ENCODE measurements at regions of chr17 and their contacts with region 1.

Region 1: GRCh38 chr17:40909351-40909750 is 24.3 kb upstream of the KRT20 start:
- DNase-seq: peak; percentile 40 to 69
- ATAC-seq: peak; percentile 78 to 96 (median 86)
- H3K4me3 ChIP-seq: no peak overlapping the region
- H3K27ac ChIP-seq: no peak overlapping the region
- H3K4me1 ChIP-seq: peaks cover 0 to 33% (median 0%) of the 10 kb centered on the region in 9 donors
- H3K27me3 ChIP-seq: peaks cover 0 to 26% (median 22%) of the 10 kb centered on the region in 7 donors
- CTCF ChIP-seq: peak; percentile 41 to 85 (median 79)

Region 2: GRCh38 chr17:40854159-40854814 is 55.1 kb before region 1 on chr17:
- intact Hi-C with region 1: loop called in 1 of 10 experiments (anchors 5 kb)
- DNase-seq: no peak
- ATAC-seq: peak in 1 of 8 donors; percentile 62
- H3K4me3 ChIP-seq: no peak overlapping the region
- H3K27ac ChIP-seq: no peak overlapping the region
- H3K4me1 ChIP-seq: peaks cover 0 to 14% (median 0%) of the 10 kb centered on the region in 9 donors
- H3K27me3 ChIP-seq: peaks cover 0 to 16% (median 0%) of the 10 kb centered on the region in 7 donors
- CTCF ChIP-seq: no peak

Region 3: GRCh38 chr17:40886090-40886489 is 23.3 kb before region 1 on chr17:
- intact Hi-C with region 1: no loop called
- DNase-seq: no peak
- ATAC-seq: no peak
- H3K4me3 ChIP-seq: no peak overlapping the region
- H3K27ac ChIP-seq: no peak overlapping the region
- H3K4me1 ChIP-seq: peaks cover 0 to 4% (median 0%) of the 10 kb centered on the region in 9 donors
- H3K27me3 ChIP-seq: peaks cover 0 to 52% (median 20%) of the 10 kb centered on the region in 7 donors
- CTCF ChIP-seq: no peak

Region 4: DNA sequence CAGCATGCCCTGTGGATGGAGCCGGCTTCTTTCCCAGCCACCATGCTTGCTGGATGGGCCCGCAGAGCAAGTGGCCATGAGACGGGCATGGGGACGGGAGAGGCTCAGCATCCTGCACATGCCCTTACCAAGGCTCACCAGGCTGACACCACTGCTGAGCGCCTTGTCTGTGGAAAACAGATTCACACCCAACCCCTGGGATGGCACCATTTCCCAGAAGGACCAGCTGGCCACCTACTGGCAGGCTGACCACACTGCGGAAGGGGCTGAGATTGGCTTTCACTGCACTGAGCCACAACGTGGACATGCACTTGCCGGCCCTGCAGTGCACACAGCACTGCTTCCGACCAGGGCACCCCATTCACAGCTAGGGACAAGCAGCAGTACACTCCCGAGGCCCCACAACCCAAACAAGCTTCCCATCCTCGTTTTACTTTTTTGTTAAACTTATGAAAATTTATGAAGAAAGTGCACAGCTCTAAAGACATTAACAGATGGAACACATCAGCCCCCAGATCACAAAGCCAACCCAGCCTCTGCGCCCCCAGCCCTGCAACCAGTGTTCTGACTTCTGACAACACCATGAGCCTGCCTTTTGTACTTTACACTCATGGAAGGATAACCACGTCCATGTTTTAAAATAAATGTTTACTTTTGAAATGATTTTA is 420.1 kb after region 1 on chr17:
- intact Hi-C with region 1: loop called in 6 of 10 experiments (anchors 5 to 10 kb)
- DNase-seq: peak in 1 of 2 donors; percentile 35
- ATAC-seq: peak in 2 of 8 donors; percentile 52 to 66
- H3K4me3 ChIP-seq: no peak overlapping the region
- H3K27ac ChIP-seq: no peak overlapping the region
- H3K4me1 ChIP-seq: no peaks in the 10 kb centered on the region
- H3K27me3 ChIP-seq: peaks cover 0 to 24% (median 0%) of the 10 kb centered on the region in 7 donors
- CTCF ChIP-seq: peak; percentile 16 to 59 (median 53)

Region 5: DNA sequence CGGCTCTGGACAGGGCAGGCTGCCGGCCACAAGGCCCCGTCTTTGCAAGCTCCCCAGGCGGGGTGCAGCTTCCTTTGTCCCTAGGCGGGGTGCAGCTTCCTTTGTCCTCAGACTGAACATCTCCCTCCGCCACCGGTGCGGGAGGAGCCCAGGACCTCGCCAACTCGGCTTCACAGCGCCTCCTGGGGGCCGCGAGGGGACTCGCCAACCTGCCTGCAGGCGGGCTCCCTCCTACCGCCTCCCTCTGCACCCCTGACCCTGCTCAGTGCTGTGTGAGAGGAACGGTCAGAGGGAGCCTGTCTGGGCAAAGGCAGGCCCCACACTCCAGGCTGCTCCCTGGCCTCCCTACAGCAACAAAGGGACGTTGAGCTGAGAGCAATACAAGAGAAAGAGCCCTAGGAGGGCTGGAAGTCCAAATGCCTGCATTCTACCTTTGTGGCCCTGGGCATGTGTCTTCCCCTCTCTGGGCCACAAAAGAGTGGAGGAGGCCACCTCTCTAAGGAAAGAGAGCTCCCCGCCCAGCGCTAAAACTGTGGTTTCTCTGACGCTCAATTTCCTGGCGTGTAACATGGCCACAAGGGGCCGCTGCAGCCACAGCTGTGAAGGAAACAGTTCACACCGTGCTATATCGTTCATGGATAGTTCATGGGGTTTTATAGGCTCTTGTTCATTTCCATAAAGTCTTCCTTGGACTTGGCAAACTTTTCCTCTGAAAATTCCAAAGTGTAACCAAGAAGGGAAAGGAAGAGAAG is 639.7 kb after region 1 on chr17:
- intact Hi-C with region 1: loop called in 8 of 10 experiments (anchors 2 to 10 kb)
- DNase-seq: peak; percentile 75 to 79
- ATAC-seq: peak; percentile 87 to 95 (median 92)
- H3K4me3 ChIP-seq: peak overlapping the region in 9 of 10 donors; percentile 10 to 39 (median 30)
- H3K27ac ChIP-seq: peak overlapping the region in 2 of 10 donors; percentile 25 to 54
- H3K4me1 ChIP-seq: peaks cover 0 to 22% (median 16%) of the 10 kb centered on the region in 9 donors
- H3K27me3 ChIP-seq: peaks cover 0 to 38% (median 8%) of the 10 kb centered on the region in 7 donors
- CTCF ChIP-seq: peak; percentile 77 to 91 (median 84)

Region 6: DNA sequence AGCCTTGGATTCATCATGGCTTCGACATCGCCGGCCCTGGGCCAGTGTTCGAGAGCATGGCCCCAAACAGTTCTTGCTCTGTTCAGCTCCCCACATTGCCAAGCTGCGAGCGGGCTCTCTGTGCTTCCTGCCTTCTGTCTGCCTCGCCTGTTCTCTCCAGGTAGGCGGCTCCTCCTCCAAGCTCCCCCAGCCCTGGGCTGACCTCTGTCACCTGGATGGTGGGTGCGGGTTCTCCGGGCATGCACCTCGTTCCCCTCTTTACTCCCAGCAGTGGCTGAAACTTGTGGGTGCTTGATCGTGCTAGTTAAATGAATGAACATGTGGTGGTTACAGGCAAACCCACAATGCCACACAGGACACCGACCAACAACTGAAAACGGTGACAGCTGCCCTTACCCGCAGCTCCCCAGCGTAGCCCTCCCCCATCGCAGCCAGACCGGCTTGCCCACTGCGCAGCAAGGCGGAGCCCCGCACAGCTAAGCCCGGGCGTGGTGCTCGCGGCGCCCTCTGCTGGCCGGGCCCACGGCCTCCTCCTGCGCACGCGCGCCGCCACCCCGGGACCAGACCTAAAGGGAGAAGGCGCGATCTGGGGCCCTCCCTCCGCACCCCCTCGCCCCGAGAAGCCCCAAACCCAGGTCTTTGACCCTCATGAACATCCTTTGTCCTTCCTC is 756.4 kb after region 1 on chr17:
- intact Hi-C with region 1: loop called in 5 of 10 experiments (anchors 1 to 5 kb)
- DNase-seq: peak; percentile 80 to 91
- ATAC-seq: peak; percentile 93 to 97 (median 96)
- H3K4me3 ChIP-seq: peak overlapping the region; percentile 43 to 68 (median 58)
- H3K27ac ChIP-seq: peak overlapping the region in 9 of 10 donors; percentile 46 to 89 (median 76)
- H3K4me1 ChIP-seq: peaks cover 0 to 34% (median 14%) of the 10 kb centered on the region in 9 donors
- H3K27me3 ChIP-seq: no peaks in the 10 kb centered on the region
- CTCF ChIP-seq: peak; percentile 93 to 99 (median 98)